ENCODE measurements at regions of chr2 and their contacts with region 1.

Region 1: GRCh38 chr2:27133905-27134780 is at the start of gene PREB:
- DNase-seq: peak; percentile 98
- H3K4me3 Mint-ChIP-seq: peak within 1 kb of the TSS; percentile 96
- H3K27ac Mint-ChIP-seq: peak within 1 kb of the TSS; percentile 95
- H3K4me1 Mint-ChIP-seq: peaks cover 10% of the 10 kb centered on the region
- H3K27me3 Mint-ChIP-seq: peaks cover 2% of the 10 kb centered on the region
- total RNA-seq, gene PREB: 79.8 and 82.6 TPM in 2 replicates

Region 2: DNA sequence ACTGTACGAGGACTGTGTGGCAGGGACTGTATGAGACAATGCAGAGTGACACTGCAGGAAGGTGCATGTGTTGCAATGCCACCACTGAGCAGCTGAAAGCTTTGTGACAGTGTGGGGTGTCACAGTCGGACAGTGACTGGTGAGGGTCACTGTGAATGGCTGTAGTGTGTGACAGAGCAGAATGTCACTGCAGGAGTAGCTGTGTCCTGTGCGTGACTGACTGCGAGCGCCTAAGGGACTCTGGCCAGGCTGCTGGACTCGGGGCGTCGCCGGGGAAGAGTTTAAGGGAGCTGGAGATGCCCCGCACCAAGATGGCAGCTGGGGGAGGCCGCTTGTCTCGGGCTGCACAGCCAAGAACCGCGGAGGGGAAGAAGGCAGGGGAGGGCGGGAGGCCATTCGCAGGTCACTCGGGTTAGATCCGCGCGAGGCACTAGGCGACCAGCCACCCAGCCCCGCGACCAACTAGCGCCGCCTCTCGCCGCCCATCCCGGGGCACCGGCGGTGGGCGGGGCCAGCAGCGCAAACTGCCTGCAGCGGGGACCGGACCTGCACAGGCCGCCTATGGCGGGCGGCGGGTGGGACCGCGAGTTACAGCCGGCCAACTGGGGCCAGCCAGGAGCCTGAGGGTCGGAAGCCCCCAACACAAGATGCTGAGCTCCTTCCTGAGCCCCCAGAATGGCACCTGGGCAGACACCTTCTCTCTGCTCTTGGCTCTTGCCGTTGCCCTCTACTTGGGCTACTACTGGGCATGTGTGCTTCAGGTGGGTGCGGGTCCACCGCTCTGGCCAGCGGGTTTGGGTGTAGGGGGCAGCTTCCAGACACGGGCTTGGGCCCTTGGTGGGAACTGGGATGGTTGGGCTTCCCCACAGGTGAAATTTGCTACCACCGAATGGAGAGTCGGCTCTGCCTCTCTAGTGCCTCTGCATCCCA is 10.6 kb before region 1 on chr2 and contains the start of gene ABHD1:
- intact Hi-C with region 1: loop called (anchors 1 kb)
- DNase-seq: peak; percentile 58
- H3K4me3 Mint-ChIP-seq: peak within 1 kb of the TSS; percentile 80
- H3K27ac Mint-ChIP-seq: peak within 1 kb of the TSS; percentile 62
- H3K4me1 Mint-ChIP-seq: peaks cover 17% of the 10 kb centered on the region
- H3K27me3 Mint-ChIP-seq: peaks cover 30% of the 10 kb centered on the region
- total RNA-seq, gene ABHD1: 1.2 and 1.5 TPM in 2 replicates

Region 3: DNA sequence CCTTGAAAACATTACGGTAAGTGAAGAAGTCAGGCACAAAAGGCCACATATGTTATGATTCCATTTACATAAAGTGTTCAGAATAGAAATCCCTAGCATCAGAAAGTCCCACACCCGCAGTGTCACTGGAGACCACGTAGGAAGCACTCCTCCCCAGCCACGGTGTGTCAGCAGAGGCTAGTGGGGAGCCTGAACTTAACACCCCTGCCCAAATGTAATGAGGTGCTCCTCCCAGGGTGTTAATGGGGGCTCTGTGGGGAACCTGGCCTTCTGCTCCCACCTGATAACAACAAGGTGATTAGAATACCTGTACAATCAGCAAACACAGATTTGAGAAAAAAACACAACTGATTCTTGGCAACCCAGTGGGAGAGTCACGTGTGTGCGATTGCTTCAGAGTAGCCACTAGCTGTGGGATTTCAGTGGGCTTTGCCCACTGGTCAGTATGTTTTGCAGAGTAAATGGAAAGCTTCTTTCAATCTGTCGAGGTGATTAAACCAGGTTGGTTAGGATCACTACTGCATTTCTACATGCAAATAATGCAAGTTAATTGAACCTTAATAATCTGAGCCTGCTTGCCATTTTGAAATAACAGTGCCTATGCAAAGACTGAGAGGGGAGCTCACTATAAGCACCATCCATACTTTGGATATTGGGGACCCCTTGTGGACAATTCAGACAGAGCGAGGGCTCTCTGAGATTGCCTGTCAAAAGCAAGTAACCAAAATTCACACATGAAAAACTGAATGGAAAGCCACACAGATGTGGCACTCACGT is 57.1 kb after region 1 on chr2:
- intact Hi-C with region 1: no loop called
- DNase-seq: peak; percentile 35
- H3K4me3 Mint-ChIP-seq: no peak overlapping the region
- H3K27ac Mint-ChIP-seq: no peak overlapping the region
- H3K4me1 Mint-ChIP-seq: no peaks in the 10 kb centered on the region
- H3K27me3 Mint-ChIP-seq: peaks cover 6% of the 10 kb centered on the region

Region 4: DNA sequence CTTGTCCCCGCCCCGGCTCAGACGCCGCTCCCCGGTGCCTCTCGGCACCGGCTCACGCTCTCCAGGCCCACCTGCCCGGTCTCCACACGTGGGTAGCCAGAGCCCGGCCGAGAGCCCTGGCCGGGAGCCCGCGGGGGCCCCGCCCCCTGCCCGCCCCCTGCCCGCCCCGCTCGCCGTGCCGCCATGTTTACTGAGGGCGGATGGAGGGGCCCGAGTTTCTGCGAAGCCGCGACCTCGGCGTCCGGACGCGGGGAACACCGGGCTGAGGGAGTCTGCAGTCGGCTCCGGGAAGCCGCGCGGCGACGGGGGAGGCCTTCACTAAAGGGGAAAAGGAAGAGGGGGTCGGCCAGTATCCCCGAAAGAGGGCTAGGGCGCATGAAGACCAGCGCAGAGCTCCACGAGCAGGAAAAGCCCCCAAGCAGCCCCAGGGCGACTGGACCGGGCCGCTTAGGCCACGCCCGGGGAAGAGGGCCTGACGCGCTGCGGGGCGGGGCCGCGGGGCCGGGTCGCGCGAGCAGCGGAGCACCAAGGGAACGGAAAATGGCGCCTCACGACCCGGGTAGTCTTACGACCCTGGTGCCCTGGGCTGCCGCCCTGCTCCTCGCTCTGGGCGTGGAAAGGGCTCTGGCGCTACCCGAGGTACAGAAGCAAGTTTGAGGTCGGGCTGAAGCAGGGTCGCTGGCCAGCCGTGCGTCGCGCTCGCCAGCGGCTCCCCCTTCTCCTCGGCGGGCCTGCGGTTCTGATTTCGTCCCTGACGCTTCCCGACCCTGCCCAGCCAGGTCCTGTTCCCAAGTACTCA is 77.9 kb after region 1 on chr2 and contains the starts of genes ATRAID and SLC5A6:
- intact Hi-C with region 1: loop called (anchors 1 kb)
- DNase-seq: peak; percentile 88
- H3K4me3 Mint-ChIP-seq: peak within 1 kb of the TSS; percentile 98
- H3K27ac Mint-ChIP-seq: peak within 1 kb of the TSS; percentile 99
- H3K4me1 Mint-ChIP-seq: peaks cover 31% of the 10 kb centered on the region
- H3K27me3 Mint-ChIP-seq: no peaks in the 10 kb centered on the region
- total RNA-seq, gene ATRAID: 107 and 114 TPM in 2 replicates
- total RNA-seq, gene SLC5A6: 70.7 and 73.9 TPM in 2 replicates

Measured in activated T-helper 2 cell treated with anti-CD3 and anti-CD28 coated beads, Interferon-gamma antibody, Interleukin-2, Interleukin-4, amounts not matched to agents 10 μg/mL and 5 μg/mL and 100 μg/mL, durations not matched to agents 14 hours and 24 hours and 36 hours (primary cell).